Body of pancreas (tissue), 4 donors: ENCODE measurements at regions of chr9 and their contacts with region 1.

Region 1: GRCh38 chr9:9631284-9631683 is 981.5 kb downstream of the PTPRD start:
- DNase-seq: no peak
- ATAC-seq: no peak
- H3K4me3 ChIP-seq: no peak overlapping the region
- H3K27ac ChIP-seq: no peak overlapping the region
- H3K4me1 ChIP-seq: no peaks in the 10 kb centered on the region
- H3K27me3 ChIP-seq: no peaks in the 10 kb centered on the region
- CTCF ChIP-seq: no peak
- POLR2A ChIP-seq: no peak

Region 2: GRCh38 chr9:9214066-9214465 is 417.2 kb before region 1 on chr9:
- intact Hi-C with region 1: no loop called
- DNase-seq: no peak
- ATAC-seq: no peak
- H3K4me3 ChIP-seq: no peak overlapping the region
- H3K27ac ChIP-seq: no peak overlapping the region
- H3K4me1 ChIP-seq: no peaks in the 10 kb centered on the region
- H3K27me3 ChIP-seq: no peaks in the 10 kb centered on the region
- CTCF ChIP-seq: no peak
- POLR2A ChIP-seq: no peak

Region 3: GRCh38 chr9:9574080-9574479 is 57.2 kb before region 1 on chr9:
- intact Hi-C with region 1: loop called (anchors 10 kb)
- DNase-seq: no peak
- ATAC-seq: no peak
- H3K4me3 ChIP-seq: no peak overlapping the region
- H3K27ac ChIP-seq: no peak overlapping the region
- H3K4me1 ChIP-seq: no peaks in the 10 kb centered on the region
- H3K27me3 ChIP-seq: no peaks in the 10 kb centered on the region
- CTCF ChIP-seq: no peak
- POLR2A ChIP-seq: no peak

Region 4: GRCh38 chr9:10479172-10479571 is 847.9 kb after region 1 on chr9:
- intact Hi-C with region 1: no loop called
- DNase-seq: no peak
- ATAC-seq: no peak
- H3K4me3 ChIP-seq: no peak overlapping the region
- H3K27ac ChIP-seq: no peak overlapping the region
- H3K4me1 ChIP-seq: no peaks in the 10 kb centered on the region
- H3K27me3 ChIP-seq: no peaks in the 10 kb centered on the region
- CTCF ChIP-seq: no peak
- POLR2A ChIP-seq: no peak